Naive thymus-derived CD4-positive, alpha-beta T cell (primary cell): ENCODE measurements at regions of chr16 and their contacts with region 1.

Region 1: GRCh38 chr16:85799497-85800337 is at the starts of genes COX4I1 and EMC8:
- DNase-seq: peak; percentile 86 to 95 (median 90)
- ATAC-seq: peak; percentile 92
- H3K4me3 ChIP-seq: peak within 1 kb of the TSS; percentile 81
- H3K4me3 Mint-ChIP-seq: peak within 1 kb of the TSS; percentile 86 to 94 (median 90)
- H3K27ac ChIP-seq: peak within 1 kb of the TSS; percentile 99
- H3K27ac Mint-ChIP-seq: peak within 1 kb of the TSS; percentile 90 to 98 (median 95)
- H3K4me1 ChIP-seq: peaks cover 18 to 26% of the 10 kb centered on the region in 2 donors
- H3K4me1 Mint-ChIP-seq: peaks cover 37 to 77% (median 68%) of the 10 kb centered on the region in 7 donors
- H3K27me3 ChIP-seq: no peaks in the 10 kb centered on the region
- H3K27me3 Mint-ChIP-seq: no peaks in the 10 kb centered on the region
- total RNA-seq, gene COX4I1: 479 to 692 (median 661) TPM
- total RNA-seq, gene EMC8: 22.4 to 31.8 (median 28.7) TPM

Region 2: DNA sequence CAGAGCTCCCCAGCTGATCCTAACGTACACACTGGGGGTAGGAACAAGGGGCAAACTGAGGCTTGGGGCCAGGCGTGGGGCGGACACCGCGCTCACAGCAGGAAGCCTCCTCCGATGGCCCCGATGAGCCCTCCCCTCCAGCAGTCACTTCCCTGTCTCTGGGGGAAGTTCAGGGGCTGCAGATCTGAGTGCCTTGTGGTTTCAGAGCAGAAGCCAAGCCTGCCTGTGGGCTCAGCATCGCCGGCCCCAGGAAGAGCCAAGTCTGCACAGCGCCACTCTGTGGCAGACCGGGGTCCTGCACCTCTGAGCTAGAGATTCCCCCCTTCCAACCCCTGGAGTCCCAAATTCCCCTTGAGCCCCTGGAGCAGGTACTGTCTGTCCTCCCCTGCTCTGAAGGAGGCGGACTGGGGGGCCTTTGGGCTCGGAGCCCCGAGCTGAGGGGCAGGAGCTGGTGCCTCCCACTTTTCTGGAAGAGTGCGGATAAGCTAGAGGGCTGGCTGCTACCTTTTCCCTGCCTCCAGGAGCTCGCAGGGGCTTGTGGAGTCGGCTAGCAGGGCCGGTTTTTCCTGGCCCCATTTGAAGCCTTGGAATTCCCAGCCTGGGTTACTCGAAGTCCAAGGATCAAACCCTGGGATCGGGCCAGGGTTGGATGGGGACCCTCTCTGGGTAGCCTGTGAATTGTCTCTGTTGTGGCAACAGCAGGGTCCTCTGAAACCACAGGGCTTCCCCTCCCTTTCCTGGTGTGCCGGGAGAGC is 183.7 kb before region 1 on chr16:
- CTCF ChIA-PET with region 1: no interaction called
- POLR2A ChIA-PET with region 1: no interaction called
- intact Hi-C with region 1: loop called (anchors 1 to 2 kb)
- DNase-seq: peak; percentile 53 to 81 (median 73)
- ATAC-seq: peak; percentile 87
- H3K4me3 ChIP-seq: peak overlapping the region; percentile 28
- H3K4me3 Mint-ChIP-seq: peak overlapping the region; percentile 62 to 87 (median 80)
- H3K27ac ChIP-seq: no peak overlapping the region
- H3K27ac Mint-ChIP-seq: peak overlapping the region in 1 of 9 donors; percentile 32
- H3K4me1 ChIP-seq: peaks cover 22 to 37% of the 10 kb centered on the region in 2 donors
- H3K4me1 Mint-ChIP-seq: peaks cover 23 to 46% (median 28%) of the 10 kb centered on the region in 7 donors
- H3K27me3 ChIP-seq: peaks cover 0 to 2% of the 10 kb centered on the region in 2 donors
- H3K27me3 Mint-ChIP-seq: peaks cover 0 to 17% (median 7%) of the 10 kb centered on the region in 5 donors

Region 3: DNA sequence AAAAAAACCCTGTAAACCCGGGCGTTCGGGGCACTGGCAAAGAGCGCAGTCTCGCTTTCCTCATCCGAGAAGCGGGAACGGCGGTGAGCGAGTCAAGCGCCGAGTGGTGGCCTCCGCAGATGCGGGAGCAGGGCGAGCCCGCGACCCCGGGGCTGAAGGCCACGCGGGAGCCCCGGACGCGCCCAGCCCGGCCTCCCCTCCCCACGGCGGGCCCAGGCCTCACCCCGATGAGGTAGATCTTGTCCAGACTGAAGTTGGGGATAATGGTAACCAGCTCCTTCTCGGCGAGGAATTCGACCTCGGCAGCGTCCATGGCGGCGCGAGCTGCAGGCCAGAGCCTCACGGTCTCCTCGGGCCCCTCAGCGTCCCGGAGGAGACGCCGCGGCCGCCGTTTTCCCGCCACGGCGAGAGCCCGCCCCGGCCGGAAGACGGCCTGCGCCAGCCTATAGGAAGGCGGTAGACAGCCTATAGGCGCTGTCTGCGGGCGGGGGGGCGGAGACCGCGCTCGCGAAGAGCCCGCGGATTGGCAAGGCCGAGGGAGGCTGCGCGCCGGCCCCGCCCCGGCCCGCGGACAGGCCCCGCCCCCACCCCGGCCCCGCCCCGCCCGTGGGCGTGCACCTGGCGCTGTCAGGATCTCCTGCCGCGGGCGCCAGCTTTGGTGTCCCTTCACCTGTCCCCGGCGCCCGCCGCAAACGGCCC is 111.0 kb before region 1 on chr16 and contains the start of gene GINS2:
- CTCF ChIA-PET with region 1: interaction called, 3 read pairs
- POLR2A ChIA-PET with region 1: no interaction called
- intact Hi-C with region 1: loop called (anchors 1 to 5 kb)
- DNase-seq: peak; percentile 77 to 90 (median 89)
- ATAC-seq: peak; percentile 100
- H3K4me3 ChIP-seq: peak within 1 kb of the TSS; percentile 69
- H3K4me3 Mint-ChIP-seq: peak within 1 kb of the TSS; percentile 64 to 85 (median 76)
- H3K27ac ChIP-seq: peak within 1 kb of the TSS; percentile 51
- H3K27ac Mint-ChIP-seq: peak within 1 kb of the TSS in 3 of 9 donors; percentile 46 to 63 (median 56)
- H3K4me1 ChIP-seq: peaks cover 5% of the 10 kb centered on the region in 2 donors
- H3K4me1 Mint-ChIP-seq: peaks cover under 1 to 21% (median 7%) of the 10 kb centered on the region in 7 donors
- H3K27me3 ChIP-seq: no peaks in the 10 kb centered on the region
- H3K27me3 Mint-ChIP-seq: peaks cover 0 to 8% (median 6%) of the 10 kb centered on the region in 5 donors
- total RNA-seq, gene GINS2: 1.0 to 43.6 (median 1.9) TPM

Region 4: GRCh38 chr16:85735225-85735635 is 64.5 kb before region 1 on chr16:
- CTCF ChIA-PET with region 1: no interaction called
- POLR2A ChIA-PET with region 1: no interaction called
- intact Hi-C with region 1: loop called in 1 of 2 experiments (anchors 2 kb)
- DNase-seq: peak in 7 of 9 donors; percentile 47 to 75 (median 66)
- ATAC-seq: peak; percentile 76
- H3K4me3 ChIP-seq: peak overlapping the region; percentile 61
- H3K4me3 Mint-ChIP-seq: peak overlapping the region; percentile 30 to 86 (median 83)
- H3K27ac ChIP-seq: peak overlapping the region; percentile 58
- H3K27ac Mint-ChIP-seq: peak overlapping the region; percentile 49 to 92 (median 86)
- H3K4me1 ChIP-seq: peaks cover 15 to 27% of the 10 kb centered on the region in 2 donors
- H3K4me1 Mint-ChIP-seq: peaks cover 9 to 40% (median 31%) of the 10 kb centered on the region in 7 donors
- H3K27me3 ChIP-seq: no peaks in the 10 kb centered on the region
- H3K27me3 Mint-ChIP-seq: no peaks in the 10 kb centered on the region

Region 5: DNA sequence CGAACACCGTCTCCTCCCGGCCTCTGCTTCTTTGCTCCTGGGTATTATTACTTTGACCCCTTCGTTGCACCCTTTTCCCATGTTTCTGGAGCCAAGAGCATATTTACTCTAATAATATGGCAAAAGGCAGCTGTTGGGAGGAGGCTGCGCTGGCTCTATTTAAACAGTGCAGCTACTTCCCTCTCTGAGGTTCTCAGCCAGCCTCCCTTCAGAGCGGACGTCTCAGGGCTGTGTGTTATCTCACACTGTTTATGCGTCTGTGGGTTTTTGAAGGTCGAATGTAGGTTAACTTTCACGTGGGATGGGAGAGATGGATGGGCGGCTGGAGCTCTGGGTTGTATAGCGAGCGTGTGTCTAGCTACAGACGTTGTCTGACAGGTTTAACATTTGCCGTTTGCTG is 45.1 kb after region 1 on chr16:
- CTCF ChIA-PET with region 1: no interaction called
- POLR2A ChIA-PET with region 1: no interaction called
- intact Hi-C with region 1: no loop called
- DNase-seq: peak in 1 of 9 donors; percentile 20
- ATAC-seq: peak; percentile 42
- H3K4me3 ChIP-seq: no peak overlapping the region
- H3K4me3 Mint-ChIP-seq: no peak overlapping the region
- H3K27ac ChIP-seq: no peak overlapping the region
- H3K27ac Mint-ChIP-seq: peak overlapping the region in 2 of 9 donors; percentile 28 to 35
- H3K4me1 ChIP-seq: no peaks in the 10 kb centered on the region
- H3K4me1 Mint-ChIP-seq: peaks cover 0 to 18% (median 12%) of the 10 kb centered on the region in 7 donors
- H3K27me3 ChIP-seq: no peaks in the 10 kb centered on the region
- H3K27me3 Mint-ChIP-seq: peaks cover 9 to 27% (median 14%) of the 10 kb centered on the region in 5 donors

Region 6: DNA sequence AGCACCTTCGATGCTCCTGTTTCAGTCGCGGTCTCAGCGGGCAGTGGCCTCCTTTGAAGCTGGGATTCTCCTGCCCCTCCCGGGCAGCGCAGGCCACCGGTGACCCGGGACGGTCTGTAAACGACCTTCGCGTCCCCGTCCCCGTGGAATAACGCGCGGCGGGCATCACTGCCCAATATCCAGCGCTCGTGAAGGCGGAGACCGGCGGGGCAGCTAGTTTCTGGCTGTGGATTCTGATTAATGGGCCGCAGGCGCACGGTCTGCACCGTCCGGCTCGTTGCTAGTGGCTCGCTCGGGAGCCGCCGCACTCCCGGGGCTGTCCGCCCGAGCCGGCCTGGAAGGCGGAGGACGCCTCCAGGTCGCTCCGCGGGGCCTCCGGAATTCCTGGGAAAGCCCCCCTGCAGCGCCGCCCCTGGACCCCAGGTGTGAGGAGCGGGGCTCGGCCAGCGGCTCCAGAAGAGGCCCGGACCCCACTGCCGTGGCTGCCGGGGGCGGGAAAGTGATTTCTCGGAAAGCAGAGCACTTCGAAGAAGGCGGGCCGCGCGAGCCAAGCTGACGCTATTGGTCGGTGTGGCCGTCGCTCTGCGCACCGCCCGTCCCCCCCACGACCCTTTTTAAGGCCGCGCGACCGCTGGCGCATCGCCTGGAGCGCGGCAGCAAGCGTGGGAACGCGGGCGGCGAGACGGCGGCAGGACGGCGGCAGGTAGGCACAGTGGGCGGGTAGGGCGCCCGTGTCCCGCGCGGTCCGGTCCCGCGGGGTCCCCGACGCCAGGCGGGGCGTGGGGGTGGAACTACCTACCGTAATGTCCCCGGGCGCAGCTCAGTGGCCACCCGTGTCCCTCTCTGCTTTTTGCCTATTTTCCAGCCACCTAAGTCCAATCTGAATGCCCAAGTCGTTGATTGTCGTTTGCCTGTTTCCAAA is 99.1 kb after region 1 on chr16 and contains the start of gene IRF8:
- CTCF ChIA-PET with region 1: no interaction called
- POLR2A ChIA-PET with region 1: no interaction called
- intact Hi-C with region 1: loop called (anchors 1 to 5 kb)
- DNase-seq: peak; percentile 55 to 86 (median 65)
- ATAC-seq: peak; percentile 79
- H3K4me3 ChIP-seq: peak within 1 kb of the TSS; percentile 51
- H3K4me3 Mint-ChIP-seq: peak within 1 kb of the TSS; percentile 79 to 92 (median 88)
- H3K27ac ChIP-seq: peak within 1 kb of the TSS; percentile 60
- H3K27ac Mint-ChIP-seq: peak within 1 kb of the TSS; percentile 13 to 83 (median 64)
- H3K4me1 ChIP-seq: peaks cover 18 to 23% of the 10 kb centered on the region in 2 donors
- H3K4me1 Mint-ChIP-seq: peaks cover 37 to 55% (median 51%) of the 10 kb centered on the region in 7 donors
- H3K27me3 ChIP-seq: no peaks in the 10 kb centered on the region
- H3K27me3 Mint-ChIP-seq: peaks cover 0 to 9% (median 0%) of the 10 kb centered on the region in 5 donors
- total RNA-seq, gene IRF8: 3.5 to 105 (median 19.9) TPM

Region 7: DNA sequence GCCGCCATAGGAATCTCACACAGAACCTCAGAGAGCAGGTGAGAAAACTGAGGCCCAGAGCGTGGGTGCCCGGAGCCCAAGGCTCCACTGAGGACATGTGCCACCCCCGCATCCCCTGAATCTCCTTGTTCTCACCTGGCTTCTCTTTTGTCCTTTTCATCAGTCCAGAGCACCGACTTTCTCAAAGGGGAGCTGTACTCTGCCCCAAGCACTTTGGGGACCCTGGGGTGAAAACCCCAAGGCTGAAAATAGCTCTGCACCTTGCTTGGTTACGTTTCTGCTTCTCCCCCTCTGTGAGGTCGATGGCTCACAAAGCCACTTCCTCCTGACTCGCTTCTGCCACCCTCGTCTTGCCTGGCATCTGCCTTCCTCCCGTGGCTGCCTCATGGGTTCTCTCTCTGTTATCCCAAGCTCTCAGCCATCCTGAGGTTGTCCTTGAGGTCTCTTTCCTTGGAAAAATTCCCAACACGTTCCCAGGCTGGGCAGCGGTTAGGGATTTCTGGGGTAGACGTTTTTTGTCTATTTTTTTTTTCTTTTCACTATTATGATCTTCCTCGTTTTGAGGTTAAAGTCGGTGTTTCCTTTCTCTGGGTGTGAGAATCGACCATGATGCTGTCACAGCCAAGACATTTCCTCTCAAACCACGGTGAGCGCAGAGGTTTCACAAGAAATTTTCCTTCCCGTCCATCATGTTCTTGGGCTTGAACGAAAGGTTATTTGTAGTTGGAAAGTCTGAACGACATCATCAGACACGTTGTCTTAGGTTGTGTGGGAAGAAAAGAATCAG is 136.4 kb after region 1 on chr16:
- CTCF ChIA-PET with region 1: no interaction called
- POLR2A ChIA-PET with region 1: no interaction called
- intact Hi-C with region 1: loop called in 1 of 2 experiments (anchors 1 kb)
- DNase-seq: peak; percentile 40 to 80 (median 74)
- ATAC-seq: peak; percentile 91
- H3K4me3 ChIP-seq: peak overlapping the region; percentile 52
- H3K4me3 Mint-ChIP-seq: peak overlapping the region; percentile 72 to 88 (median 82)
- H3K27ac ChIP-seq: peak overlapping the region; percentile 68
- H3K27ac Mint-ChIP-seq: peak overlapping the region; percentile 91 to 98 (median 95)
- H3K4me1 ChIP-seq: peaks cover 25 to 29% of the 10 kb centered on the region in 2 donors
- H3K4me1 Mint-ChIP-seq: peaks cover 34 to 54% (median 40%) of the 10 kb centered on the region in 7 donors
- H3K27me3 ChIP-seq: no peaks in the 10 kb centered on the region
- H3K27me3 Mint-ChIP-seq: peaks cover 0 to 3% (median 0%) of the 10 kb centered on the region in 5 donors

Region 8: DNA sequence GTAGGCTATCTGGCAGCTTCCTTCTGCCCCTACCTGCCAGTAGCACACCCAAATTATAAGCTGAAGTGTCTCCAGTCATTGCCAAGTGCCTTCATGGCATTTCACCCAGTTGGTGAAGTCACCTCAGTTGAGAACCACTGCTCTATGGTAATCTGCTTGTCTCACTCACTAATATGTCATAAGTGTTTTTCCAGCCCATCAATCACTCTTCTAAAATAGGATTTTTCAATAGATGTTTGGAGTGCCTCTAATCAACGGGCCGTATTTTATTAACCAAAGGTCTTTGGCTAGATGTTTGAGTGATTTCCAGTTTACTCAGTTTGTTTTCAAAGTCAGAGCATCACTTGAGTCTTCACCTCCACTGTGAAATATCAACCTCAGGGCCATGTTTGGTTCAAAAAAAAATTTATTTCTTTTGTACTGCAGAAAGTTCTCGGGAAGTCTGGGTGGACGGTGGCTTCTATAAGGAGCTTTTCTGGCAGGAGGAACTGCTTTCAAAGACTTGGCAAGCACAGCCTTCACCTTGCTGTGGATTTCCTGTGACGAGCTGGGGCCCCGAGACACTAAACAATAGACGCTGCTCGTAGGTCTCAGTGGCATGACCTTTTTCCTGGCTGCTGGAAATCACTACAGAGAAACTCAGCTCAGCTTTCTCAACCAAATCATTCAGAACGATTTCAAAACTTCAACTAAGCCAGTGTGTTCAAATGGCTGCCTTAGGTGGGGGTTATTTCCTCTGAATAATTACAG is 615.4 kb after region 1 on chr16:
- CTCF ChIA-PET with region 1: no interaction called
- POLR2A ChIA-PET with region 1: no interaction called
- intact Hi-C with region 1: no loop called
- DNase-seq: no peak
- ATAC-seq: no peak
- H3K4me3 ChIP-seq: no peak overlapping the region
- H3K4me3 Mint-ChIP-seq: no peak overlapping the region
- H3K27ac ChIP-seq: no peak overlapping the region
- H3K27ac Mint-ChIP-seq: peak overlapping the region in 1 of 9 donors; percentile 41
- H3K4me1 ChIP-seq: no peaks in the 10 kb centered on the region
- H3K4me1 Mint-ChIP-seq: peaks cover 0 to 5% (median 0%) of the 10 kb centered on the region in 7 donors
- H3K27me3 ChIP-seq: no peaks in the 10 kb centered on the region
- H3K27me3 Mint-ChIP-seq: peaks cover 0 to 24% (median 5%) of the 10 kb centered on the region in 5 donors